ENCODE measurements at regions of chr10 and their contacts with region 1.

Region 1: DNA sequence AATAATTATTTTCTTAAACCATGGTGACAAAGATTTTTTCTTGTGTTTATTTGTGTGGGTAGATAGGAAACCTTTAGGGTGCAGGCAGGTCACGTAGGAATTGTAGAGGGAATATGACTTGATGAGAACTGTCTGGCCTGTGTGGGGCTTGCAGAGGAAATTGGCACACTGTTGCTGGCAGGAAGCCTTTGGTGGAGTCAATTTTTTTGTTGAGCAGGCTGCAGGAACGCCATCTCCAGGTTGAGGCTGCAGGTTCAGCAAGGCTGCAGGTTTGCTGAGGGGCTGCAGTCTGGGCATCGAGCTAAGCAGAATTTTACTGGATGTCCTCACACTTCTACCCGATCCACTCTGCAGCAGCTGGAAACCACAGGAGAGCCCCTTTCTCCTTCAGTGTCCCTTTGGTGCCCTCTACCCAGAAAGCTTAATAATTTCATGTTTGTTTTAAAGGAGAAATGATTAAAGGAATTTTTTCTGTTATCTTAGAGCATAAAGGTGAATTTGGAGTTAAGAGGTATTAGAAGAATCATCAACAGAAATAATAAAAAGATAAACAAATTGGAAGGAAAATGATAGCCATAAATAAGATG is 37.0 kb downstream of the TBC1D12 start:
- DNase-seq: no peak
- H3K4me3 ChIP-seq: no peak overlapping the region
- H3K27ac ChIP-seq: no peak overlapping the region
- H3K27me3 ChIP-seq: no peaks in the 10 kb centered on the region
- CTCF ChIP-seq: 0 out of 2 replicates have a peak, but pooled peaks have one; percentile 30

Region 2: GRCh38 chr10:93816123-93816747 is 623.1 kb before region 1 on chr10:
- CTCF ChIA-PET with region 1: interaction called, 18 read pairs
- POLR2A ChIA-PET with region 1: no interaction called
- DNase-seq: peak; percentile 7
- H3K4me3 ChIP-seq: peak overlapping the region; percentile 4; the same call in 1 of the 2 replicates
- H3K27ac ChIP-seq: no peak overlapping the region
- H3K27me3 ChIP-seq: peaks cover 17% of the 10 kb centered on the region
- CTCF ChIP-seq: peak; percentile 78

Region 3: DNA sequence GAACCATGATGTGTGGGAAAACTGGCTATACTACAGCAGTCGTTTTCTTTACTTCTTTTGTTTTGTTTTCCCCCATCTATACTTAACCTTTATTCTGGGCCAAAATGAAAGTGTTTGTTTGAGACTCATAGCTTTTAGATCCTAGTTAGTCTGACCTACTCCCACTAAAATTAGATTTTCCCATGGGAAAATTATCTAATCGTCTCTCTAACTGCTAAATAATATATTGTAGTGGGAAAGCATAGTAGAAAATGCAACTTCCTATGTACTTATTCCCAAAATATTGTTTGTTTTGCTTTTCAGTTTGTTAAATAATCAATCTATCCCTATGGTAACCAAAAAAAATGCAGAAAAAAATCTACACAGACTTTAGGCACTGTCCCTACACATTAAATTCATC is 173.3 kb before region 1 on chr10:
- CTCF ChIA-PET with region 1: interaction called, 12 read pairs
- POLR2A ChIA-PET with region 1: no interaction called
- DNase-seq: no peak
- H3K4me3 ChIP-seq: no peak overlapping the region
- H3K27ac ChIP-seq: no peak overlapping the region
- H3K27me3 ChIP-seq: no peaks in the 10 kb centered on the region
- CTCF ChIP-seq: no peak

Region 4: DNA sequence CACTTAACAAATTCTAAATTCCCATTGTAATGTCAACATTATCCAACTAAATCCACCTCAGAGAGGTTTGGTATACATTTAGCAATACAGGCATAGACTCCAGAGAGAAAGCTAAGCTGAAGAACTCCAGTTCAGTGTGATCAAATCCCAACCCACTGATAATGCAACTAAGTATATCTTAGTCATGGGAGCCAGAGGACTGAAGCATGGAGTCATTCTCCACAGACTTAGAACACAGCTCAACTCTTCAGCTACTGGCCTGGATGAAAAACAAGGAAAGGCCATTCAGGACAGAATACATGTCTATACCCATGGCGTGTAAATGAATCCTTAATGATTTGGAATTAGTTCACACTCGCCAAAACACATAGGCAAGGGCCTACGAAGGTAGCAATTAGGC is 104.5 kb before region 1 on chr10:
- CTCF ChIA-PET with region 1: interaction called, 30 read pairs
- POLR2A ChIA-PET with region 1: no interaction called
- DNase-seq: no peak
- H3K4me3 ChIP-seq: no peak overlapping the region
- H3K27ac ChIP-seq: no peak overlapping the region
- H3K27me3 ChIP-seq: no peaks in the 10 kb centered on the region
- CTCF ChIP-seq: no peak

Region 5: GRCh38 chr10:94362360-94363250 is 76.8 kb before region 1 on chr10 and contains the start of gene NOC3L:
- CTCF ChIA-PET with region 1: interaction called, 52 read pairs
- POLR2A ChIA-PET with region 1: interaction called, 3 read pairs
- DNase-seq: peak; percentile 80
- H3K4me3 ChIP-seq: peak within 1 kb of the TSS; percentile 89
- H3K27ac ChIP-seq: peak within 1 kb of the TSS; percentile 79
- H3K27me3 ChIP-seq: peaks cover 2% of the 10 kb centered on the region
- CTCF ChIP-seq: peak; percentile 68
- polyA plus RNA-seq, gene NOC3L: 14.8 and 20.9 TPM in 2 replicates

Region 6: DNA sequence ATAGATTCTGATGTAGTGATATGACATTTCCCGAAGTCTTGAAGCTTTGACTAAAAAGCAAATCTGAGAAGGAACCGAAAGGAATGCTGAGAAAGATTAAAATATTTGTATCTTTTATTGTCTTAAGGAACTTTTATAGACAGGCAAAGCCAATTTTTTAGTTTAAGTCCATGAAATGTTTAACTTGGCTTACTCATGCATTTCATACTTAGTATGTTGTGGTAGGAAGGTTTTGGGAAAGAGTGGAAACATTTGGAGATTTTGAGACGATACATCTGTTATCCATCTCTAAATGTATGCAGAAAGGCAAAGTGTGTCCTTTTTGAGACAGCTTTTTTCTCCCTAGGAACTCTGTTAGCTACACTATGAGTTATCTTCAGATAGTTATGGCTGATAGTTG is 26.9 kb before region 1 on chr10:
- CTCF ChIA-PET with region 1: interaction called, 43 read pairs
- POLR2A ChIA-PET with region 1: interaction called, 3 read pairs
- DNase-seq: peak; percentile 42
- H3K4me3 ChIP-seq: no peak overlapping the region
- H3K27ac ChIP-seq: no peak overlapping the region
- H3K27me3 ChIP-seq: no peaks in the 10 kb centered on the region
- CTCF ChIP-seq: no peak

Region 7: DNA sequence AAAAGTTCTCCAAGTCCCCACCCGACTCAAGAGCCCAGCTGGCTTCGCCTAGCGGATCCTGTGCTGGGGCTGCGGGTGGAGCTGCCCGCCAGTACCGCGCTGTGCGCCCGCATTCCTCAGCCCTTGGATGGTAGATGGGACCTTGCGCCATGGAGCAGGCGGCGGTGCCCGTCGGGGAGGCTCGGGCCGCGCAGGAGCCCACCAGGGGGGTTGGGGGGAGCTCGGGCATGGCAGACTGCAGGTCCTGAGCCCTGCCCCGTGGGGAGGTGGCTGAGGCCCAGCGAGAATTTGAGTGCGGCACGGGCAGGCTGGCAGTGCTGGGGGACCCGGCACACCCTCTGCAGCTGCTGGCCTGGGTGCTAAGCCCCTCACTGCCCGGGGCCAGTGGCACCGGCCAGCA is 20.0 kb after region 1 on chr10:
- CTCF ChIA-PET with region 1: interaction called, 37 read pairs
- POLR2A ChIA-PET with region 1: no interaction called
- DNase-seq: no peak
- H3K4me3 ChIP-seq: no peak overlapping the region
- H3K27ac ChIP-seq: no peak overlapping the region
- H3K27me3 ChIP-seq: no peaks in the 10 kb centered on the region
- CTCF ChIP-seq: no peak